Lower leg skin (tissue), 4 donors: ENCODE measurements at regions of chr1 and their contacts with region 1.

Region 1: DNA sequence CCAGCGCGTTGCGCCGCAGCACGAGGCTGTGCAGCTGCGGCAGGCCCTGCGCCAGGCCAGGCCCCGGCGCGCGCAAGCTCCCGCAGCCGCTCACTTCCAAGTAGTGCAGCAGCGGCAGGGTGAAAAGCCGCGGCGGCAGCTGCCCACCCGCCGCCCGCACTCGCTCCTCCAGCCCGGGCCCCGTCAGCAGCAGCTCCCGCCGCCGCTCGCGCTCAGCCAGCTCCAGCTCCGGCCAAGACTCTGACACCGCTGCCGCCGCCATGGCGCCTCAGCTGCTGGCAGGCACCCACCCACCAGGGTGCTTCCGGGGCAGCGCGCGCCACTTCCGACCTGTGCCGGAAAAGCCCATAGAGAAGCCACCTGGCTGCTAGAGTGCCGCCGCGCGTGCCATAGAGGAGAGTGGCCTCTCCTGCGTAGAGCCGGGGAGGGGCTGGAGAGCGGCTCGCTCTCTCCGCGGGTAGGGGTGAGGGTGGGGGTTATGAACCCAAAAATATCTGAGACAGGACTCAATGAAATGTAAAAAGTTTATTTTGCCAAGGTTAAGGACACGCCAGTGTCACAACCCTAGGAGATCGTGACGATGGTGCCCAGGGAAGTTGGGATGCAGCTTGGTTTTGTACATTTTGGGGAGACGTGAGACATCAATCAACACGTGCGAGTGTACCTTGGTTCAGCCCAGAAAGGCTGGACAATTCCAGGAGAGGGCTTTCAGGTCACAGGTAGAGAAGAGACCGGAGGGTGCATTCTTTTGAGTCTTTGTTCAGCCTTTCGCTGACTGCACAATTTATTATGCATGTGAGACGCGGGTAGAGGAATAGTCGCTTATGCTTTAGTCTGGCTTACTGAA is at the start of gene LRRC47:
- DNase-seq: peak; percentile 90 to 98
- H3K4me3 ChIP-seq: peak within 1 kb of the TSS; percentile 75
- CTCF ChIP-seq: no peak
- POLR2A ChIP-seq: no peak
- total RNA-seq, gene LRRC47: 43.6 to 55.3 (median 49.7) TPM

Region 2: GRCh38 chr1:3624200-3625136 is 172.0 kb before region 1 on chr1 and contains the start of gene TPRG1L:
- intact Hi-C with region 1: loop called (anchors 5 kb)
- DNase-seq: peak; percentile 97 to 100
- H3K4me3 ChIP-seq: peak within 1 kb of the TSS; percentile 91
- CTCF ChIP-seq: no peak
- POLR2A ChIP-seq: no peak
- total RNA-seq, gene TPRG1L: 44.1 to 54.3 (median 52.2) TPM